Left ventricle myocardium inferior (tissue), 1 donor: ENCODE measurements at regions of chr12 and their contacts with region 1.

Region 1: GRCh38 chr12:89352492-89353187 is at the start of gene DUSP6:
- DNase-seq: peak; percentile 94
- H3K4me3 ChIP-seq: peak within 1 kb of the TSS; percentile 89
- H3K27ac ChIP-seq: peak within 1 kb of the TSS; percentile 99
- H3K4me1 ChIP-seq: peaks cover 83% of the 10 kb centered on the region
- H3K27me3 ChIP-seq: no peaks in the 10 kb centered on the region
- CTCF ChIP-seq: no peak
- total RNA-seq, gene DUSP6: 16.1 TPM

Region 2: DNA sequence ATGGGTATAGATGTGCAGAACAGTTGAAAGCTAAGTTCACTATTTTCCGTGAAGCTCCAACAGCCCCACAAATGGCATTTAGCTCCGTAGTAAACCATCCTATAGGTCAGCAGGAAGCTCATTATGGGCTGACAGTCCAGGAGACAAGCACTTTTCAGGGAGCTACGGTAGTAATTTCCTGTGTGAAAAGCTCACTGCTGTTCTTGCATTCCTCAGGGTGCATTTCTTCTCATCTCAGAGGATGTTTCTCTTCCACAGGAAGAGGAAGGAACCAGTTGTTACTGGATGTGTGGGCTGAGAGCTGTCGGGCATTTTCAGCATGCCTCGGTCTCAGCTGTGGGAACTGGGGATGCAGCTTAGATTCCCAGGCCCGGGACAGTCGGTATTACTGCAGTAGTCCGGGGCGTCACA is 99.2 kb after region 1 on chr12:
- intact Hi-C with region 1: loop called (anchors 10 kb)
- DNase-seq: peak; percentile 25
- H3K4me3 ChIP-seq: peak overlapping the region; percentile 20
- H3K27ac ChIP-seq: peak overlapping the region; percentile 81
- H3K4me1 ChIP-seq: peaks cover 43% of the 10 kb centered on the region
- H3K27me3 ChIP-seq: no peaks in the 10 kb centered on the region
- CTCF ChIP-seq: no peak

Region 3: GRCh38 chr12:89636052-89636775 is 283.6 kb after region 1 on chr12:
- intact Hi-C with region 1: no loop called
- DNase-seq: no peak
- H3K4me3 ChIP-seq: no peak overlapping the region
- H3K27ac ChIP-seq: no peak overlapping the region
- H3K4me1 ChIP-seq: no peaks in the 10 kb centered on the region
- H3K27me3 ChIP-seq: no peaks in the 10 kb centered on the region
- CTCF ChIP-seq: no peak